GM12878 (cell line): ENCODE measurements at regions of chr1 and their contacts with region 1.

Region 1: GRCh38 chr1:28668191-28668955 is at the start of gene GMEB1:
- DNase-seq: peak; percentile 34
- ATAC-seq: peak; percentile 84
- H3K4me3 ChIP-seq: peak within 1 kb of the TSS; percentile 100
- H3K27ac ChIP-seq: peak within 1 kb of the TSS; percentile 99
- H3K4me1 ChIP-seq: no peaks in the 10 kb centered on the region
- H3K27me3 ChIP-seq: no peaks in the 10 kb centered on the region
- CTCF ChIP-seq: 0 out of 6 replicates have a peak, but pooled peaks of 1 of the 3 experiments have one; percentile 4
- EP300 ChIP-seq: no peak
- POLR2A ChIP-seq: 0 out of 2 replicates have a peak, but pooled peaks have one; percentile 6
- RAD21 ChIP-seq: no peak
- polyA plus RNA-seq, gene GMEB1: 4.9 to 7.5 TPM

Region 2: DNA sequence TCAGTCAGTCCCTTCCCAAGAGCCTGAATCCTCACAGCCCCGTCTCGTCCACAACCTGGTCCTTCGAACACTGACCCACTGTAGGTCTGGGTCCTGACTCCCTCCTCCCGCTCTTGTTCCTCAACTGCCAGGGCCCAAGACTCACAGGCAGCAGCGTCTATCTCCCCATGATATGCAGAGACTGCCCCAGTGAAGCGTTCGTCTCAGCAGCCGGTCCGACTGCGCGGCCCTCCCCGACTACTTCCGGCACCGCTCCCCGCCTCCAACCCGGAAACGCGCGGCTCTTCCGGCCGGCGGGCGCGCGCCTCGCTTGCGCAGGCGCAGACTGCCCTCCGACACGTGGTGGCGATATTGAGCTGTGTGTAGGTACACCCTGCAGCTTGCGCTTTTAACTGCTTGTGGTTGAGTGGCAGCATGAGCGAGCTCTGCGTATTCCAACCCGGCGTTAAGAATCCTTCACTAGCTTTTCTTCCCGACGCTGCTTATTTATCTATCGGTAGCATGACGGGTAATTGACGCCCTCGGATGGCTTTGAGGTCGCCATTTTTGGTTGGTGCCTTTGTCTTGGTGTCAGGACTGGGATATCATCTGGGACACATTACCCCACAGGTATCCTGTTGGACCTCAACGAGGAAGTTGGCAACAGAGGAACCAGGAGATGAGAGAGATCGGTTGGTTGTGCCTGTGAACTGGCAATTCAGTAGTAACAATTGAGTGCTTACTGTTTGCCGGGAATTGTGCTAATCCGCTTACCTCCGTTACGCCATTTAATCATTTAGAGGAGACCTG is 25.3 kb before region 1 on chr1 and contains the start of gene TAF12:
- CTCF ChIA-PET with region 1: interaction called, 6 read pairs
- POLR2A ChIA-PET with region 1: interaction called, 43 read pairs
- RAD21 ChIA-PET with region 1: interaction called, 26 read pairs
- SMC1A ChIA-PET with region 1: interaction called, 21 read pairs
- in situ Hi-C with region 1: no loop called
- intact Hi-C with region 1: loop called (anchors 1 kb)
- DNase-seq: peak; percentile 93
- ATAC-seq: peak; percentile 90
- H3K4me3 ChIP-seq: peak within 1 kb of the TSS; percentile 92
- H3K27ac ChIP-seq: peak within 1 kb of the TSS; percentile 90
- H3K4me1 ChIP-seq: peaks cover 13% of the 10 kb centered on the region
- H3K27me3 ChIP-seq: no peaks in the 10 kb centered on the region
- CTCF ChIP-seq: peak; percentile 32 to 73 (median 42); a peak in 4 of 6 replicates
- EP300 ChIP-seq: 0 out of 4 replicates have a peak, but pooled peaks of 1 of the 2 experiments have one; percentile 31
- POLR2A ChIP-seq: peak; percentile 99
- RAD21 ChIP-seq: peak; percentile 49
- polyA plus RNA-seq, gene TAF12: 34.3 to 41.9 TPM

Region 3: DNA sequence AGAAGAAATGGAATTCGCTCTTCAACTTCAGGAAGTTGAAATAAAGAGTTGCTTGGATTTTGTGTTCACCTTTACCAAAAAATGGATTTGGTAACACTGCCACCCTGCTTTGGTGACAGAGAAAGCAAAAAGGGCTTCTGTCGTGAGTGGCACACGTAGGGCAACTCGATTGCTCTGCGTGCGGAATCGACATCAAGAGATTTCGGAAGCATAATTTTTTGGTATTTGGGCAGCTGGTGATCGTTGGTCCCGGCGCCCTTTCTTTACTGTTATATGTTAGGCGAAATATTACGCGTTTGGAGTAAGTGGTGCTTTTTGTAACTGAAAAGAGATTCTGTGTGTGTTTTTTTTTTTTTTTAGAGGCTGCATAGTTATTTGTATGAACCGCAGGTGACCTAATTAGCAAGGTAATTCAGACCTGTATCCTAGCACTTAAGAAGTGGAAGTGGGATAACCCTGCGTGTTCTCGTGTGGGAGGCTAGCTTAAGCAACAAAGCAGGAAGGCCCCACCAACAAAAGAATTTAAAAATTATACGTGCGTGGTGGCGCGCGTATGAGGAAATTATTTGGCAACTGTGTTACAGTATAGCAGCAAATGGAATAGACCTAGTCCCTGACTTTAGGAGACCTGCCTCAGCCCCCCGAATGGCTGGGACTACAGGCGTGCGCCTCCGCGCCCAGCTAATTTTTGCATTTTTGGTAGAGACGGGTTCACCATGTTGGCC is 19.7 kb before region 1 on chr1 and contains the start of gene RNU11:
- CTCF ChIA-PET with region 1: interaction called, 6 read pairs
- POLR2A ChIA-PET with region 1: interaction called, 43 read pairs
- RAD21 ChIA-PET with region 1: interaction called, 26 read pairs
- SMC1A ChIA-PET with region 1: interaction called, 21 read pairs
- in situ Hi-C with region 1: no loop called
- intact Hi-C with region 1: loop called (anchors 1 kb)
- DNase-seq: peak; percentile 97
- ATAC-seq: peak; percentile 85
- H3K4me3 ChIP-seq: peak within 1 kb of the TSS; percentile 55; the same call in 1 of the 2 replicates
- H3K27ac ChIP-seq: peak within 1 kb of the TSS; percentile 99
- H3K4me1 ChIP-seq: peaks cover 11% of the 10 kb centered on the region
- H3K27me3 ChIP-seq: no peaks in the 10 kb centered on the region
- CTCF ChIP-seq: no peak
- EP300 ChIP-seq: 0 out of 4 replicates have a peak, but pooled peaks have one; percentile 37 to 54
- POLR2A ChIP-seq: peak; percentile 97
- RAD21 ChIP-seq: no peak
- polyA plus RNA-seq, gene RNU11: not detected